ENCODE measurements at regions of chr12 and their contacts with region 1.

Region 1: GRCh38 chr12:120649442-120650232 is 9.2 kb downstream of the CABP1 start:
- DNase-seq: no peak
- ATAC-seq: no peak

Region 2: DNA sequence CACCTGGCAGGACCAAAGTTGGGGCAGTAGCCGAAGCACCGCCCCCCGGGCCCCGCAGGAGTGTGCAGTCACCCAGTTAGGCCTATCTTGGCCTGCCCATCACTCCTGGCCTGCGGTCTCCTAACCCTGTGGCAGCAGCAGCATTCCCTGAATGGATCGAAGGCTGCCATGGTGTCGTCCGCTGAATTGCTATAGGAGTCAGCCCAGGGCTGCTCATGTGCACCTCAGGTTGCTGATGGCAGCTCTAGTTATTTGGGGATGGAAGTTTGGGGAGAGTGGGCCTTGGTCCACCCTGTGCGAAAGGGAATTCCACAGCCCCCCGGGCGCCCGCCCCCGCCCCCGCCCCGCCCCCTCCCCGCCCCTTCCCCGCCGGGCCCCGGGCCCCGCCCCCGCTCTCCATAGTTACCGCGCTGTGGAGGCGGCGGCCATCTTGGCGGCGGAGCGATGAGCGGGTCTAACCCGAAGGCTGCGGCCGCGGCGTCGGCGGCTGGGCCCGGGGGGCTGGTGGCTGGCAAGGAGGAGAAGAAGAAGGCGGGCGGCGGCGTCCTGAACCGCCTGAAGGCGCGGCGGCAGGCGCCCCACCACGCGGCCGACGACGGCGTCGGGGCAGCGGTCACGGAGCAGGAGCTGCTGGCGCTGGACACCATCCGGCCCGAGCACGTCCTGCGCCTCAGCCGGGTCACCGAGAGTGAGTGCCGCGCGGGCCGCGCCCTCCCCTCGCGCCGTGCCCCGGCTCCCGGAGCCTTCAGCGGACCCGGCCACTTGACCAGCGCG is 60.6 kb after region 1 on chr12 and contains the start of gene UNC119B:
- intact Hi-C with region 1: loop called in 1 of 2 experiments (anchors 5 kb)
- DNase-seq: peak in 1 of 2 donors; percentile 82
- ATAC-seq: peak; percentile 81
- total RNA-seq, gene UNC119B: 15.1 to 27.5 TPM

Region 3: DNA sequence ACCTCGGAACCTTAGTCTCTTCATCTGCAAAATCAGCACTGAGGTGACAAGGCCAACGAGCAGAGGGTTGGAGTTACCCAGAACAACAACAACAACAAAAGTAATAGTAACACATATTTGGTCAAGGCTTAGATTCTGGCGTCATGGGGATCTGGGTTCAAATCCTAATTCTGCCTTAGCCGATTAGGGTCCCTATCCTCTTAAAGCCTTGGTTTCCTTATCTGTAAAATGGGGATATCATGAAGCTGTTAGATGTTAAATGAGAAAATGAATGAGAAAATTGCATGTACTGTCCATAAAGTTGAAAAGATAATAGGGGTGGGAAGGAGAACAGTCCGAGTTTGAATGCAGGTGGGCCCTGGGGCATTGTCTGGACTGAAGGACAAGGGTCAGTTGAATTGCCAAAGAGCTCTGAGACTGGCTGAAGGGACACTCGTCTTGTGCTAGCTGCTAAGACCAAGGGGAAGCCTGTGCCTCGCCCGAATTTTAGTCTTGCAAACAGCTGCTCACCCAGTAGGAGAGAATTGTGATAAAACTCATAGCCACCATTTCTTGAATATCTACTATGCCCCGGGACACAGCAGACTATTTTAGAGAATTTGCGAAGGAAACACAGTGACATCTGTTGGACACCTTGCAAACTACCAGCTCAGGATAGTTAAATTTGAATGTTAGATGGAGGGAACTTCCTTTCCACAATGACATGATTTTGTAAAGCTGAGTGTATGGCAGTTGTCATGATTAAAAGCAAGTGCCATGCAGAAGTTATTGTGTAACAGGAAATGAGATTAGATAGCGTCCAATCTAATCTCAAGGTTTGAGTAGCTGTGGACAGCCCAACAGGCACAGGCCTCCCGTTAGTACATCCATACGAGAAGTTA is 321.9 kb after region 1 on chr12:
- intact Hi-C with region 1: loop called in 1 of 2 experiments (anchors 5 kb)
- DNase-seq: no peak
- ATAC-seq: peak; percentile 59